ENCODE measurements at regions of chr13 and their contacts with region 1.

Region 1: GRCh38 chr13:37640499-37640898 is 41.9 kb upstream of the POSTN start:
- DNase-seq: peak; percentile 86
- ATAC-seq: peak; percentile 91
- H3K4me3 ChIP-seq: no peak overlapping the region
- H3K27ac ChIP-seq: no peak overlapping the region
- H3K4me1 ChIP-seq: peaks cover 4% of the 10 kb centered on the region
- H3K27me3 ChIP-seq: no peaks in the 10 kb centered on the region
- CTCF ChIP-seq: peak; percentile 87
- POLR2A ChIP-seq: 0 out of 2 replicates have a peak, but pooled peaks have one; percentile 38
- RAD21 ChIP-seq: peak; percentile 94

Region 2: DNA sequence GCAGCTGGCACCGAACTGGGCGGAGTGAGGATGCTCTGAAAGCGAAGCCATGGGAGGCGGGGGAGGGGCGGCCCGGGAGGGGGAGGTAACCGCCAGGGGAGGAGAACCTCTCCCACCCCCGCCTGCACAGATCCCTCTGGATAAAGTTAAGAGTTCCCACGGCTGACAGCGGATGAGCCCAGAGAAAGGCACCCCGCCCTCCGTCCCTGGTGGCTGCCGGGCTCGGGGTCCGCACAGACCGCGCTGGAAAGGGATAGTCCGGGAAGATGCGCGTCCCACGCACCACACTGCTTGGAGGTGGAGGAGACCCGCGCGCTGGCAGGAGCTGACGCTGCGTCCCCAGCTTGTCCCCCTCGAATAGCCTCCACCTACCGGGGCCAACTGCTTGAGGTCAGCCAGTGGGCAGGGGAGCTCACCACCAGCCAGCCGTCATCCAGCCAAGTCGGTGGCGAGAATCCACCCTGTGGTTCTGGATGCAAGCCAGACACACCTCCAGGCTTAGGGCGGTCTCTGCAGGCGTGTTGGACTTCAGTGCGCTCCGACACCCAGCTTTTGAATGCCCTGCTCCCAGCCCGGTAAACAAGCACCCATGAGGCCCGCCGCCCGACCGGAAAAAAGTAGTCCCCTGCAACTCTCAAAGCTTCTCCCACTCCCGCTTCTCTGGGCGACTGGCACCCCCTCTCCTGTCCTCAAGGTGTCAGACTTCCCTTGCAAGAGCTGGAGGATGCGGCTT is 229.4 kb after region 1 on chr13 and contains the start of gene TRPC4:
- CTCF ChIA-PET with region 1: interaction called, 6 read pairs
- POLR2A ChIA-PET with region 1: no interaction called
- dilution Hi-C with region 1: no loop called
- in situ Hi-C with region 1: loop called (anchors 10 kb)
- intact Hi-C with region 1: loop called (anchors 1 kb)
- DNase-seq: peak; percentile 59
- ATAC-seq: peak; percentile 55
- H3K4me3 ChIP-seq: peak within 1 kb of the TSS; percentile 55
- H3K27ac ChIP-seq: peak within 1 kb of the TSS; percentile 21; the same call in 1 of the 2 replicates
- H3K4me1 ChIP-seq: peaks cover 4% of the 10 kb centered on the region
- H3K27me3 ChIP-seq: no peaks in the 10 kb centered on the region
- CTCF ChIP-seq: peak; percentile 47
- POLR2A ChIP-seq: no peak
- RAD21 ChIP-seq: peak; percentile 56
- total RNA-seq, gene TRPC4: 5.2 and 5.3 TPM in 2 replicates

Region 3: GRCh38 chr13:38045307-38046048 is 405.0 kb after region 1 on chr13:
- CTCF ChIA-PET with region 1: interaction called, 3 read pairs
- POLR2A ChIA-PET with region 1: no interaction called
- dilution Hi-C with region 1: no loop called
- in situ Hi-C with region 1: loop called (anchors 5 kb)
- intact Hi-C with region 1: loop called (anchors 1 kb)
- DNase-seq: peak; percentile 33
- ATAC-seq: peak; percentile 65
- H3K4me3 ChIP-seq: no peak overlapping the region
- H3K27ac ChIP-seq: no peak overlapping the region
- H3K4me1 ChIP-seq: no peaks in the 10 kb centered on the region
- H3K27me3 ChIP-seq: no peaks in the 10 kb centered on the region
- CTCF ChIP-seq: peak; percentile 61
- POLR2A ChIP-seq: no peak
- RAD21 ChIP-seq: peak; percentile 67

Region 4: DNA sequence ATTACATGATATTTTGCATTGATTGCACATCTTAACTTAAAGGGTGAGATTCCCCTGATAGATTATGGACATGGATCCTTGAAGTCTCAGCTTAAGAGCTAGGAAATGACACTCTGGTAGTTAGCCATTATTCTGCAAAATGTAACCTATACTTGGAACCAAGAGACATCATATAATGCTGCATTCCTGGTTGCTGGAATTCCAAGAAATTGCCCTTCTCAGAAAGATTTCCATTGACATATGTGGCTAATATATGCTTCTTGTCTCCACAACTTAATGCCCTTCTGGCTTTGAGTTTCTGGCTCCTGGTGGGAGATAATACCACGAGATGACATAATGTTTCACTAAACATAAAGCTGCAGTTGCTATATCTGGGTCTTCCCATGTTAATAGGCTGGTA is 433.4 kb after region 1 on chr13:
- CTCF ChIA-PET with region 1: no interaction called
- POLR2A ChIA-PET with region 1: no interaction called
- dilution Hi-C with region 1: no loop called
- in situ Hi-C with region 1: no loop called
- intact Hi-C with region 1: no loop called
- DNase-seq: no peak
- ATAC-seq: no peak
- H3K4me3 ChIP-seq: no peak overlapping the region
- H3K27ac ChIP-seq: no peak overlapping the region
- H3K4me1 ChIP-seq: no peaks in the 10 kb centered on the region
- H3K27me3 ChIP-seq: no peaks in the 10 kb centered on the region
- CTCF ChIP-seq: no peak
- POLR2A ChIP-seq: no peak
- RAD21 ChIP-seq: no peak

Region 5: GRCh38 chr13:38349390-38350113 is 709.1 kb after region 1 on chr13 and contains the start of gene UFM1:
- CTCF ChIA-PET with region 1: interaction called, 3 read pairs
- POLR2A ChIA-PET with region 1: no interaction called
- dilution Hi-C with region 1: no loop called
- in situ Hi-C with region 1: loop called (anchors 25 kb)
- intact Hi-C with region 1: loop called (anchors 2 kb)
- DNase-seq: peak; percentile 96
- ATAC-seq: peak; percentile 98
- H3K4me3 ChIP-seq: peak within 1 kb of the TSS; percentile 70
- H3K27ac ChIP-seq: peak within 1 kb of the TSS; percentile 89
- H3K4me1 ChIP-seq: peaks cover 2% of the 10 kb centered on the region
- H3K27me3 ChIP-seq: no peaks in the 10 kb centered on the region
- CTCF ChIP-seq: no peak
- POLR2A ChIP-seq: peak; percentile 95
- RAD21 ChIP-seq: no peak
- total RNA-seq, gene UFM1: 94.5 and 127 TPM in 2 replicates

Region 6: DNA sequence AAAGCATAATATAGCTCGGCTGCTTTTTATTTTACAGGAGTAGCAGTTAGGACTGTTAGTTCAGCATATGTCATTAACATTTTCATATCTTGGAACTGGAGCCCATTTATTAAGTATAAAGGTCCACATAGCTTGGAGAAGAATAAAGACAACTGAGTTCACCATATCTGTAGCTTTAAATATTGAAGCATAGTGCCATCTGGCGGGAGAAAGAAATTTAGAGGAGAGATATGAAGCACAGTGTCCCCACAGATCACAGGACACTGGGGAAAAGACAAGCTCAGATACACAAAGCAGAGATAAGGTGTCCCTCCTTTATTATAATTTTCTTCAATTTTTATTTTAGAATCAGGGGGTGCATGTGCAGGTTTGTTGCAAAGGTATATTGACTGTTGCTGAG is 941.6 kb after region 1 on chr13:
- CTCF ChIA-PET with region 1: no interaction called
- POLR2A ChIA-PET with region 1: no interaction called
- dilution Hi-C with region 1: no loop called
- in situ Hi-C with region 1: loop called (anchors 25 kb)
- intact Hi-C with region 1: loop called (anchors 2 kb)
- DNase-seq: peak; percentile 16
- ATAC-seq: peak; percentile 79
- H3K4me3 ChIP-seq: no peak overlapping the region
- H3K27ac ChIP-seq: no peak overlapping the region
- H3K4me1 ChIP-seq: no peaks in the 10 kb centered on the region
- H3K27me3 ChIP-seq: no peaks in the 10 kb centered on the region
- CTCF ChIP-seq: peak; percentile 35; the same call in 1 of the 2 replicates
- POLR2A ChIP-seq: no peak
- RAD21 ChIP-seq: peak; percentile 33; the same call in 1 of the 2 replicates

Region 7: DNA sequence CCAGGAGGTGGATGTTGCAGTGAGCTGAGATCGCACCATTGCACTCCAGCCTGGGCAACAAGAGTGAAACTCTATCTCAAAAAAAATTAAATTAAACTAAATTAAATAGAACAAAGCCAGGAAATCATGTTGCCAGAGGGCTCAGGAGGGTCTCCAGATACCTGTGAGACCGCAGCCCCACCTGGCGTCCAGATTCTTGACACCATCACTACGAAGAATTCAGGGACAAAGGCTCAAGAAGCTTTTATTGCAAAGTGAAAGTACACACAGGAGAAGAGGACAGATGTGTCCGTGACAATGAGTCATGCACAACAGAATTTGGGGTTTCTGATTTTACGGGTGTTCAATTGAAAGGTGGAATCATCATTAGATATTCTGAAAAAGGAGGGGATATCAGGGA is 1273.6 kb after region 1 on chr13:
- CTCF ChIA-PET with region 1: no interaction called
- POLR2A ChIA-PET with region 1: no interaction called
- dilution Hi-C with region 1: no loop called
- in situ Hi-C with region 1: no loop called
- intact Hi-C with region 1: loop called (anchors 10 kb)
- DNase-seq: no peak
- ATAC-seq: no peak
- H3K4me3 ChIP-seq: no peak overlapping the region
- H3K27ac ChIP-seq: no peak overlapping the region
- H3K4me1 ChIP-seq: no peaks in the 10 kb centered on the region
- H3K27me3 ChIP-seq: no peaks in the 10 kb centered on the region
- CTCF ChIP-seq: no peak
- POLR2A ChIP-seq: no peak
- RAD21 ChIP-seq: no peak